ENCODE measurements at regions of chr3 and their contacts with region 1.

Region 1: GRCh38 chr3:51799879-51800749 is 21.1 kb upstream of the IQCF6 start:
- DNase-seq: no peak
- ATAC-seq: peak; percentile 53

Region 2: GRCh38 chr3:51501833-51502561 is 298.1 kb before region 1 on chr3:
- intact Hi-C with region 1: loop called (anchors 2 kb)
- DNase-seq: peak; percentile 88
- ATAC-seq: peak; percentile 24

Region 3: DNA sequence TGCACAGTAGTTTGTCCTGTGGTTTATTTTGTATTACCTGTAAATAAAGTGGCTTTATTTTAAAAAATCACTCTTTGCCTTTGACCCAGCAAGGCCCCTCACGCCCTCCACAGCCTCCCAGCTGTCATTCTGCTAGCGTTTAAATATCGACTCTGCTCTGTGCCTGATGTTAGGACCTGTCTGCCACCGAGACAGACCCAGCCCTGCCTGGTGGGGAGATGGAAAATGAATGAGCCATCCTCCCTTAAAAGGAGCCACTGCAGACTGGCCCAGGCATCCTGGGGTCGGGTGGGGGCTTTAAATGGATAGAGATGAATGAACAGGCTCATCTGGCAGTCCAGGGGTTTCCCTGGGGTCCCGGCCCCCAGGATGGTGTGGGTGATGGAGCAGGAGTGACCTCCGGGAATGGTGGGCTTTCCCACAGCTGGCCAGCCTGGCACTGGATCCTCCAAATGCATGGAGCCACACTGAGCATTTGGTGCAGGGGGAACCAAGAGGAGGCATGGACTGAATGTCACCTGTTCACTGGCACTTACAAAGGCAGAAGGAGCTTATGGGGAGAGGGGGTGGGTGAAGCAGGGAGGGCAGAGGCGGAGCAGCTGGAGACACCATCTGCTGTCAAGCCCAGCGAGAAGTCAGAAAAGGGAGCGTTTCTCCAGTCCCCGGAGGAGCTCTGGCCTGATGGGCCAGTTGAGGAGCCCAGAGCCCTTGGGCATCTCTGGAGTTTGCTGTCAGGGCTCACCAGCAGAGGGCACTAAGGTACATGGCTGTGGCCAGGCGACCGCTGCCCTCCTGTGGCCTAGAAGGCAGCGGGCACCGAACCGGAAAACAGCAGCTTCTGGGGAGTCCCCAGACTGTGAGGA is 81.3 kb before region 1 on chr3:
- intact Hi-C with region 1: loop called (anchors 5 kb)
- DNase-seq: peak; percentile 73
- ATAC-seq: peak; percentile 79

Region 4: DNA sequence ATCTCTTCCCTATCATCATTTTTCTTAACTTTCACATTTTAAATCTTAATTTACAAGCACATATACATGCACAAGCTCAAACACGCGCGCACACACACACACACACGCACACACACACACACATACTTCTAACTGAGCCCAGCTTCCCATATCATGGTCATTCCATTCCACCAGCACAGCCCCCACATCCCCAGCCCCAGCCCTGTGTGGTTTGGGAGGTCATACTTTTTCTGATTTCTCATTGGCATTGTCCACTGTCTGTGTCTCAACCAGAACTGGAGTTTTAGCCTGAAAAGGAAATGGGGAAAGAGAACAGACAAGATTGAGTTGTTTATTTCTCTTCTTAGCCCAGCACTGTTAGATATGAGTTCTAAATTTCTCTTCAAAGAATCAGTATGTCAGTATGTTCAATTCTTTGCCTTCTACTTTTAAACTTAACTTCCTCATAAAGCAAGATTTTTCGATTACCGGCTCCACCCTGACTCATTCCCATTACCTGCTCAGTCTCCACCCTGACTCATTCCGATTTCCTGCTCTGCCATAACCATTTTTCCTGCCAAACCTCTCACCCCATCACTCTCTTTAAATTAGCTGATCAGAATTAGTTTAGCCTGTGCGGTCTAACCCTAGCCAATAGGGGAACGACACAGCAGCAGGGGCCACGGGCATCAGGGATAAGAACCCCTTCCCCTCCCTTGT is 96.6 kb after region 1 on chr3:
- intact Hi-C with region 1: no loop called
- DNase-seq: no peak
- ATAC-seq: no peak